HEK293 (cell line): ENCODE measurements at regions of chr17 and their contacts with region 1.

Region 1: GRCh38 chr17:9918804-9919352 is 13.8 kb upstream of the RCVRN start:
- H3K4me3 ChIP-seq: no peak overlapping the region
- H3K27ac ChIP-seq: no peak overlapping the region
- H3K4me1 ChIP-seq: no peaks in the 10 kb centered on the region
- CTCF ChIP-seq: no peak

Region 2: DNA sequence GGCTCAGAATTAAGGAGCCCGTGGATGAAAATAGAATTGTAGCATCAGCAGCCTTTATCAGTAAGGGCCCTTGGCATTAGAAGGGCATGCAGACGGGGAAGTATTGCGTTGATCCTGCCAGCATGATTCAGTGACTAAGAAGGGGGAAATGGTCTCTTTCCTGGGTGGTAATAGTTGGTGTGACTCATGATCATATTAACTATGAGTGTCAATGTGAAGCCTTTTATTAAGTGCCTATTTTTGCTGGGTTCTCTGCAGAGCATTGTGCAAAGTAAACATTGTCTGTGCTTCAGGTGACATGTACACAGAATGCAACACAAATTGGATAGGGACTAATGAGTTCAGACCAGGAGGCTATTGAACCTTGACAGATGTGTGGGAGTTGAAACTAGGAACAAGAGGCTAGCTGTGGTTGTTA is 38.3 kb before region 1 on chr17:
- CTCF ChIA-PET with region 1: no interaction called
- POLR2A ChIA-PET with region 1: no interaction called
- H3K4me3 ChIP-seq: no peak overlapping the region
- H3K27ac ChIP-seq: no peak overlapping the region
- H3K4me1 ChIP-seq: no peaks in the 10 kb centered on the region
- CTCF ChIP-seq: no peak

Region 3: DNA sequence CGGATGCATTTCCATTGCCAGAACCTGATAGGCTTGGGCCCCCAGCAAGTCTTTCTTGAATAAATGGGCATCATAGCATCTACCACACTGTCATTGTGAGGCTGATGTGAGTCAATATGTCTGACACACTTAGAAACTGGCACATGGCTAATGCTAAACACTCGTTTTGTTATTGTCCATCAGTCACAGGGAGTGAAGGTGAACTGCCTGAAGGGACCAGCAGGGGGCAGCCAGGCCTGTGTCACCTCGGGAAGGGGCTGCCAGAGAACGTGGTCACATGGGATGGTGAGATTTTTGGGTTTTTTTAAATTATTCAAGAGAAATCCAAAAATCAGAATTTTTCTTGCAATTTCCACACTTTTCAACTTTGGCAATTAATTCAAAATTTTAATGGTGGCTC is 13.0 kb before region 1 on chr17:
- CTCF ChIA-PET with region 1: interaction called, 13 read pairs
- POLR2A ChIA-PET with region 1: no interaction called
- H3K4me3 ChIP-seq: no peak overlapping the region
- H3K27ac ChIP-seq: no peak overlapping the region
- H3K4me1 ChIP-seq: no peaks in the 10 kb centered on the region
- CTCF ChIP-seq: no peak

Region 4: GRCh38 chr17:10127819-10128425 is 209.0 kb after region 1 on chr17:
- CTCF ChIA-PET with region 1: no interaction called
- POLR2A ChIA-PET with region 1: no interaction called
- H3K4me3 ChIP-seq: no peak overlapping the region
- H3K27ac ChIP-seq: no peak overlapping the region
- H3K4me1 ChIP-seq: no peaks in the 10 kb centered on the region
- CTCF ChIP-seq: no peak